Activated T-helper 1 cell treated with anti-CD3 and anti-CD28 coated beads, Interleukin-12 subunit alpha, Interleukin-12 subunit beta, Interleukin-2, Interleukin-4 antibody, amounts not matched to agents 30 ng/mL and 10 ng/mL and 1 ng/mL, durations not matched to agents 14 hours and 24 hours and 36 hours (primary cell): ENCODE measurements at regions of chr6 and their contacts with region 1.

Region 1: GRCh38 chr6:137497721-137498463 is 3.7 kb upstream of the OLIG3 start:
- DNase-seq: no peak
- H3K4me3 Mint-ChIP-seq: no peak overlapping the region
- H3K27ac Mint-ChIP-seq: no peak overlapping the region
- H3K4me1 Mint-ChIP-seq: peaks cover 20% of the 10 kb centered on the region
- H3K27me3 Mint-ChIP-seq: peaks cover 80% of the 10 kb centered on the region

Region 2: GRCh38 chr6:137271245-137272183 is 226.4 kb before region 1 on chr6:
- intact Hi-C with region 1: loop called (anchors 2 kb)
- DNase-seq: no peak
- H3K4me3 Mint-ChIP-seq: no peak overlapping the region
- H3K27ac Mint-ChIP-seq: no peak overlapping the region
- H3K4me1 Mint-ChIP-seq: peaks cover 13% of the 10 kb centered on the region
- H3K27me3 Mint-ChIP-seq: peaks cover 31% of the 10 kb centered on the region

Region 3: GRCh38 chr6:137512757-137513605 is 15.1 kb after region 1 on chr6:
- intact Hi-C with region 1: loop called (anchors 2 kb)
- DNase-seq: no peak
- H3K4me3 Mint-ChIP-seq: no peak overlapping the region
- H3K27ac Mint-ChIP-seq: no peak overlapping the region
- H3K4me1 Mint-ChIP-seq: no peaks in the 10 kb centered on the region
- H3K27me3 Mint-ChIP-seq: peaks cover 68% of the 10 kb centered on the region

Region 4: DNA sequence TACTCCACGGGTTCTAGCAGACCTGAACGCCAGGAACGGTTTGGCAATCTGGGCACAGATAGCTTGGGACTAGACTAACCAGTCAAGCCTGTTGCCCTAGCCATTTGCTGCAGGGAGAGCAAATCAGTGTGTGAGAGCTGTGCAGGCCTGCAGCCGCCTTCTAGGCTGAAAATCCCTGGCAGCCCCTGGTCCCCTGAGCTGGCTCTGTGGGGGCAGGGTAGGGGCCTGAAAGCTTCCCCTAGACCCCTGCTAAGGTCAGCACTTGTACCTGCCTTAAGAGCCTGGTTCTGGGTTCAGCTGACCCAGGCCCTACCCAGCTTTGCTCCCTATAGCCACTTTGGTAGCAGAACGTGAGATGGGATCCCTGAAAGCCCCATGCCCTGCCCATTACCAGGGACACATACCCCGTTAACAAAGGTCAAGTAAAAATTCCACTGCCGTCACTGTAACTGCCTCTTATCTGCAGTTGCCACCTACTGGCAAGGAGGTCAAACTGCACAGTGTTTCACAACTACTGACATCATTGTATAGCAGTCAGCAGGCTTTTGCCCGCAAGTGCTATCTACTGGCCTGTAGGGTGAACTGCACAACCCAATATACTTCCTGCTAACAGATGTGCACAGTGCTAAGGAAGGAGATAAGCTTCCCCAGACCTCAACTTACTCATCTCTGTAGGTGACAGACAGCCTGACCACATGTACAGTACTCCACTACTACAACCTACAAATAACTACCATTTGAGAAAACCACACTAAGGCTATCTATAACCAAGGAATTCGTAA is 91.4 kb after region 1 on chr6:
- intact Hi-C with region 1: loop called (anchors 2 kb)
- DNase-seq: peak; percentile 40
- H3K4me3 Mint-ChIP-seq: no peak overlapping the region
- H3K27ac Mint-ChIP-seq: no peak overlapping the region
- H3K4me1 Mint-ChIP-seq: peaks cover 8% of the 10 kb centered on the region
- H3K27me3 Mint-ChIP-seq: peaks cover 22% of the 10 kb centered on the region

Region 5: DNA sequence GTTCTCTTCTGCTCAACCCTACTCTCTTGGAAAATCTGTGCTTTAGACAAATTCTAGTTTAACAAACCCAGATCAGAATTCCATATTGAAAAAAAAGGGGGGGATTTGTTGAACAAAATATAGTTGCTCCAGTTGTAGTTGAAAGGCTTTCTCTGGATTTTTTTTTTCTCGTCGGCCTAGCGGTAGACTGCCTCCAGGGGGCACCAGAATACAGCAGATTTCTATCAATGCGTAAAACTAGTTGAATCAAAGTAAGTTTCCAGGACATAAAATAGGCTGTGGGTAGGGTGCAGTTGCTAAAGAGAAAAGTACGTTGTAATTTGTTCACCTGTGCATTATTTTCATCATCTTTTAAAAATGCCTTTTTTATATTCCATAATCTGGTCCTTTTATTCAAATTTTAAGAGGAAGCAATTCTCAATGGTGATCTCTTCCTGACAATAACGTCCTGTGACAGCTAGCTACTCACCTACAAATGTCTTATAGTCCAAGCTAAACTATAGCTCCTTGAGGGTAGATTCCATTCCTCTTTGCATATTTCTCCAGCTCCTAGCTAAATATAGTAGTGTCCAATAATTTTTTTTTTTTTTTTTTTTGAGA is 504.0 kb after region 1 on chr6:
- intact Hi-C with region 1: loop called (anchors 2 kb)
- DNase-seq: peak; percentile 38
- H3K4me3 Mint-ChIP-seq: no peak overlapping the region
- H3K27ac Mint-ChIP-seq: no peak overlapping the region
- H3K4me1 Mint-ChIP-seq: peaks cover 27% of the 10 kb centered on the region
- H3K27me3 Mint-ChIP-seq: peaks cover 6% of the 10 kb centered on the region